RWPE1 (cell line): ENCODE measurements at regions of chr2 and their contacts with region 1.

Region 1: GRCh38 chr2:25825238-25825637 is 53.0 kb downstream of the ASXL2 start:
- DNase-seq: no peak
- H3K27ac ChIP-seq: no peak overlapping the region
- CTCF ChIP-seq: no peak

Region 2: GRCh38 chr2:25757891-25758290 is 67.3 kb before region 1 on chr2:
- CTCF ChIA-PET with region 1: no interaction called
- POLR2A ChIA-PET with region 1: no interaction called
- DNase-seq: no peak
- H3K27ac ChIP-seq: no peak overlapping the region
- CTCF ChIP-seq: no peak

Region 3: GRCh38 chr2:25960920-25961319 is 135.7 kb after region 1 on chr2:
- CTCF ChIA-PET with region 1: no interaction called
- POLR2A ChIA-PET with region 1: no interaction called
- DNase-seq: peak; percentile 34
- H3K27ac ChIP-seq: no peak overlapping the region; the same call in 1 of the 2 replicates
- CTCF ChIP-seq: no peak

Region 4: DNA sequence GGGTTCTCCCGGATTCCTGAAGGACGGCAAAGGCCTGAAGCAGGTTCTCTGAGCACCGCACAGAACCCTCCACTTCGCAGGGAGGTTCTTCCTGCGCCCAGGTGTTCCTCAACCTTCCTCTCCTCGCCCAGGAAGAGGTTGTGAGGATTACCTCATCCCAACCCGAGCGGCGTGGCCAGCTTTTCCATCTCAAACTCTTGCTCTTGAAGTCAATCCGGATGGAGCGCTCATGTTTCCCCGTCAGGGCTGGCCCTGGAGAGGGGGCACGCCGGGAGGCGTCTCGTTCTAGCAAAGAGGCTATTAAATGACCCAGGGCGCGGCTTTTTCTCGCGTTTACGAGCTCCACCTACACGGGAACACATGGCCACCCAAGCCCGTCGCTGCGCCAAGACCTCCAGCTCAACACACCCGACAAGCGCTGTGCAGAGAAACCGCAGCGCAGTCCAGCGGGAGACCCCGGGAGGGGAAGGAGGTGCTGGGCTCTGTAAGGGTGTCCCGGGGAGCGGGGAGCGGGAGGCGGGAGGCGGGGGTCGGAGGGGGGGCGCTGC is 208.1 kb after region 1 on chr2:
- CTCF ChIA-PET with region 1: interaction called, 11 read pairs
- POLR2A ChIA-PET with region 1: no interaction called
- DNase-seq: peak; percentile 70
- H3K27ac ChIP-seq: peak overlapping the region; percentile 98
- CTCF ChIP-seq: no peak